ENCODE measurements at regions of chr12 and their contacts with region 1.

Region 1: DNA sequence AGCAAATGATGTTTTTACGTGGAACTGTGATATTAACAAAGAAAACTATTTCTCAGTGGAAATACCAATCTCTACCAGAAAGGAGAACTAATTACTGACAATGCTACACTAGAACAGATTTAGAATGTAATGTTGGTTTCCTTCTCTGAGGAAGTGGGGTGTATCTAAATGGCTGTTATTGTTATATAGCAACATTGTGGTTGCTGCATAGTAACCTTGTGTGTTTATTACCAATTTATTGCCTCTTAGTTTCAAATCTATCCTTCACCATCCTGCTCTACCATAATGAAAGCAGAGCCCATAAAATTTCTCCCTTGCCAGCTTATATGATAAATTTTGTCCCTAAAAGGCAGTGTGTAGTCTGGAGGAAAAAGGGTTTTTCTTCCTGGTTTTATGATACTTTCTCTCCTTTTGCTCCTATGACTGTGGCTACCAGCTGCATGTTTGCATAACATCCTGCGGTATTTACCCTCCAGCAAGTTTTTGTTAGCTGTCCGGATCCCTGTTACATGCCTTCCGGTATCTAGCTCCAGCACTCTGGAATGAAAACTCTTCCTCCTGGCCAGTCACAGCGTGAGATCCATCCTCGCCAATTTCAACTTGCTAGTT is 5.7 kb upstream of the KLRK1 start:
- DNase-seq: peak in 6 of 10 donors; percentile 43 to 87 (median 69)
- ATAC-seq: peak; percentile 71 to 80
- H3K4me3 Mint-ChIP-seq: peak overlapping the region; percentile 63 to 91 (median 83)
- H3K27ac Mint-ChIP-seq: peak overlapping the region; percentile 97 to 100 (median 99)
- H3K4me1 Mint-ChIP-seq: peaks cover 35 to 78% (median 70%) of the 10 kb centered on the region in 4 donors
- H3K27me3 Mint-ChIP-seq: no peaks in the 10 kb centered on the region

Region 2: DNA sequence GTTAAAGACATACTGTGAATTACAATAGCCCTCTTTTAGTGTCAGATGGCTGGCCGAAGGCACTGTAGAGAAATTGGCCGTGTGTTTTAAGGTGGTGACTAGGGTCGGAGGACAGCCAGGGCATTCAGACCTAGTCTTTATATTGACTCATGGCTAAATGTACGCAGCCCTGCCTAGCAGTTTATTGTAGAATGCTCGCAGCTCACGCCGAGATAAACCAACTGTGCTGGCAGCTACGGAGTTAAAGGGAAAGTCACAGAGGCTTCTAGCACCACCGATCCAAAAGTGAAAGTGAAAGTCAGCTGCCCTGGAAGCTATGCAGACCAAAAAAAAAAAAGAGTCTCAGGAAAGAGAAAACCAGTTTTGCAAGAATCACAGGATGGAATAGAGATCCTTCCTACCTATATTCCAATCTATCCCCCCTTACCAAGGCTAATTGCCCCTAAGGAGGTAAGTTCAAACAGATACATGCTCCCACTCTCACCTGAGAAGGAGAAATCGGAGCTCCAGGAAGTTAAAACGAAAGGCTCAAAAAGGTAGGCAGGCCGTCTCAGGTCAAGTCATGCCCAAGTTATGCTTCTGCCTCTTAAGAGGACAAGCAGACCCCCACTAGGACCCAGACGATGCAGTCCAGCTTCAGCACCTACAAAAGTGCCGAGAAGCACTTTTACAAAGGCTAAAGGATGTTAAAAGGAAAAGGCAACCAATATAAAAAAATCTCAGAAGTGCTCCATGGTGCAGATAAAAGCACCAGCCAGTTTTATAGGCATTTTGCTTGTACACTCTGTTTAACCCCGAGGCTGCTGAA is 30.5 kb before region 1 on chr12:
- POLR2A ChIA-PET with region 1: interaction called, 31 read pairs
- DNase-seq: peak; percentile 29 to 87 (median 72)
- ATAC-seq: peak; percentile 57 to 67
- H3K4me3 Mint-ChIP-seq: no peak overlapping the region
- H3K27ac Mint-ChIP-seq: no peak overlapping the region
- H3K4me1 Mint-ChIP-seq: peaks cover 7 to 41% (median 34%) of the 10 kb centered on the region in 4 donors
- H3K27me3 Mint-ChIP-seq: no peaks in the 10 kb centered on the region

Region 3: GRCh38 chr12:10409387-10409786 is 13.9 kb after region 1 on chr12 and contains the start of gene KLRC4:
- POLR2A ChIA-PET with region 1: interaction called, 28 read pairs
- DNase-seq: peak in 6 of 10 donors; percentile 7 to 68 (median 52)
- ATAC-seq: peak; percentile 81 to 89
- H3K4me3 Mint-ChIP-seq: peak within 1 kb of the TSS; percentile 86 to 97 (median 90)
- H3K27ac Mint-ChIP-seq: peak within 1 kb of the TSS; percentile 38 to 98 (median 92)
- H3K4me1 Mint-ChIP-seq: peaks cover 9 to 36% (median 25%) of the 10 kb centered on the region in 4 donors
- H3K27me3 Mint-ChIP-seq: no peaks in the 10 kb centered on the region
- polyA plus RNA-seq, gene KLRC4: 1.3 to 31.8 (median 13.6) TPM